Activated CD4-positive, alpha-beta memory T cell treated with anti-CD3 and anti-CD28 coated beads, Interleukin-2, amount 10 ng/mL, durations not matched to agents 7 days and 5 days (primary cell): ENCODE measurements at regions of chr13 and their contacts with region 1.

Region 1: GRCh38 chr13:95624020-95624419 is 20.5 kb downstream of the DZIP1 start:
- DNase-seq: no peak
- H3K4me3 Mint-ChIP-seq: no peak overlapping the region
- H3K27ac Mint-ChIP-seq: no peak overlapping the region
- H3K4me1 Mint-ChIP-seq: no peaks in the 10 kb centered on the region
- H3K27me3 Mint-ChIP-seq: peaks cover 19% of the 10 kb centered on the region

Region 2: DNA sequence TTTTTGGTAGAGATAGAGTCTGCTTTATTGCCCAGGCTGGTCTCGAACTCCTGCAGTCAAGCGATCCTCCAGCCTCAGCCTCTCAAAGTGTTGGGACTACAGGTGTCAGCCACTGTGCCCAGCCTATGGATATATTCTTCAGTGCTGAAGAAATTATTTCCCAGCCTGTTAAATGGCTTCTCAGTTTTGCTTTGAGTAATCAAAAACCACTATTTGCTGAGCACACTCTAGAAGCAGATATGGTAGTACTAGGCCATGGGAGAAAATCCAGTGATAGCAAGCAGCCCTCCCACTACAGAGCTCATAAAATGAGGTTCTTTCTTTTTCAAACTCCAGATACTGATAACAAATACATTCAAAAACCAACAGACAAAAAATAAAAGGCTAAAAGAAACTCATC is 152.1 kb before region 1 on chr13:
- CTCF ChIA-PET with region 1: no interaction called
- POLR2A ChIA-PET with region 1: no interaction called
- DNase-seq: no peak
- H3K4me3 Mint-ChIP-seq: no peak overlapping the region
- H3K27ac Mint-ChIP-seq: no peak overlapping the region
- H3K4me1 Mint-ChIP-seq: no peaks in the 10 kb centered on the region
- H3K27me3 Mint-ChIP-seq: peaks cover 3% of the 10 kb centered on the region

Region 3: DNA sequence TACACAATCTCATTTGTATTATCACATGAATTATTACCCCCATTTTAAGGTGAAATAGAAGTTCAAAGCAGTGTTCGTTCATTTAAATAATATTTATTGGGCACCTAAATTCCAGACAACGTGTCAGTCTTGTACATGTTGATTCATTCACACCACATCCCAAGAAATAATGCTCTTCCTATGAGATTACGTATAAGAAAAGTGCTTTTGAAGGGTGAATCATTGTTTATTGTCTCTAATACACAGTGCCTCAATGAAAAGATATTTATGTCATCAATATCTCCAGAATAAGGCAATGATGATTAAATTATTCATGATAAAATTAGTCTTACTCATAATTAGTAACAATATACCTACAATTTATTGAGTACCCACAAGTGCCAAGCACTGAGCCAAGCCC is 35.9 kb before region 1 on chr13:
- CTCF ChIA-PET with region 1: no interaction called
- POLR2A ChIA-PET with region 1: no interaction called
- DNase-seq: no peak
- H3K4me3 Mint-ChIP-seq: no peak overlapping the region
- H3K27ac Mint-ChIP-seq: no peak overlapping the region
- H3K4me1 Mint-ChIP-seq: no peaks in the 10 kb centered on the region
- H3K27me3 Mint-ChIP-seq: peaks cover 10% of the 10 kb centered on the region

Region 4: GRCh38 chr13:95660981-95661581 is 37.1 kb after region 1 on chr13:
- CTCF ChIA-PET with region 1: interaction called, 45 read pairs
- POLR2A ChIA-PET with region 1: no interaction called
- DNase-seq: no peak
- H3K4me3 Mint-ChIP-seq: no peak overlapping the region
- H3K27ac Mint-ChIP-seq: no peak overlapping the region
- H3K4me1 Mint-ChIP-seq: no peaks in the 10 kb centered on the region
- H3K27me3 Mint-ChIP-seq: peaks cover 28% of the 10 kb centered on the region

Region 5: GRCh38 chr13:95834134-95834765 is 210.2 kb after region 1 on chr13:
- CTCF ChIA-PET with region 1: interaction called, 85 read pairs
- POLR2A ChIA-PET with region 1: no interaction called
- DNase-seq: peak; percentile 70
- H3K4me3 Mint-ChIP-seq: no peak overlapping the region
- H3K27ac Mint-ChIP-seq: no peak overlapping the region
- H3K4me1 Mint-ChIP-seq: no peaks in the 10 kb centered on the region
- H3K27me3 Mint-ChIP-seq: peaks cover 31% of the 10 kb centered on the region